Posterior vena cava (tissue), 2 donors: ENCODE measurements at regions of chr6 and their contacts with region 1.

Region 1: DNA sequence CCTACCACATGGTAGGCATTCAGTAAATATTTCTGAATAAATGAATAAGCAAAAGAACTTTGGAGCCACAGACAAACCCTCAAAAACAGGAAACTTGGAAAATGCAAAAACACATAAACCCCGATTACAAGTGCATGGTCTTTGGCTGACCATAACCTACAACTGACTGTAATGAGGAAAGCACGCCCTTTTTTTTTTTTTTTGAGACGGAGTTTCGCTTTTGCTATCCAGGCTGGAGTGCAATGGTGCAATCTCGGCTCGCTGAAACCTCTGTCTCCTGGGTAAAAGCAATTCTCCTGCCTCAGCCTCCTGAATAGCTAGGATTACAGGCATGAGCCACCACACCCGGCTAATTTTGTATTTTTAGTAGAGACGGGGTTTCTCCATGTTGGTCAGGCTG is 11.9 kb upstream of the LATS1 start:
- DNase-seq: no peak

Region 2: GRCh38 chr6:149235130-149235561 is 494.7 kb before region 1 on chr6:
- intact Hi-C with region 1: loop called in 1 of 2 experiments (anchors 10 kb)
- DNase-seq: no peak

Region 3: GRCh38 chr6:149473080-149474052 is 256.5 kb before region 1 on chr6:
- intact Hi-C with region 1: no loop called
- DNase-seq: peak; percentile 58